PC-3 (cell line): ENCODE measurements at regions of chr16 and their contacts with region 1.

Region 1: DNA sequence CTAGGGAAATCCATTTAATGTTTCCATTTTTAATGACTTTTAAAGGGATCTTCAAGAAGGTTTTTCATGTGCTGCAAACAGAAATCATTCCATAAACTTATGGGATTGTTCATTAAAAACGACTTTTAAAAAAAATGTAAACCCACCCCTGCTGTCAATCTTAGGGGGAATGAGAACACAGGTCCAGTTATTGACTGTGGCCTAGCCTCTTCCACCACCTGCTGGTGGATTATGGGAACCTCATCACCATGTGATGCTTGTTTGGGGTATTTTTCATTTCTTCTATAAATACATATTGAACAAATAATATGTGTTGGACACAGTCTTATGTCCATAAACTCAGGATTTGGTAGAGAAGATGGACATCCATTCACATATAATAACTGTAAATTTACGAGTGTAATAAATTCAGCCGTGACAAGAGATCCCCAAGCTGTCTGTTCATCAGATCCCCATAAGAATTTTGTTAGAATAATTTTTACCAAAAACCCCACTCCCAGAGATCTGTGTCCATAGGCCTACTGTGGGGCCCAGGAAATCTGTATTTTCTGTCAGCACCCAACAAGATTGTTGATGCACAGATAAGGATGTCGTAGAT is 42.0 kb upstream of the TMC5 start:
- DNase-seq: peak; percentile 67
- ATAC-seq: peak; percentile 67
- H3K4me3 ChIP-seq: no peak overlapping the region
- H3K27ac ChIP-seq: no peak overlapping the region
- H3K4me1 ChIP-seq: no peaks in the 10 kb centered on the region
- H3K27me3 ChIP-seq: no peaks in the 10 kb centered on the region
- CTCF ChIP-seq: peak; percentile 86

Region 2: GRCh38 chr16:19167710-19168370 is 207.8 kb before region 1 on chr16 and contains the start of gene SYT17:
- CTCF ChIA-PET with region 1: no interaction called
- POLR2A ChIA-PET with region 1: no interaction called
- intact Hi-C with region 1: loop called (anchors 5 kb)
- DNase-seq: peak; percentile 79
- ATAC-seq: peak; percentile 88
- H3K4me3 ChIP-seq: peak within 1 kb of the TSS; percentile 79
- H3K27ac ChIP-seq: no peak within 1 kb of the TSS
- H3K4me1 ChIP-seq: no peaks in the 10 kb centered on the region
- H3K27me3 ChIP-seq: no peaks in the 10 kb centered on the region
- CTCF ChIP-seq: peak; percentile 65
- total RNA-seq, gene SYT17: 10.8 and 11.8 TPM in 2 replicates

Region 3: GRCh38 chr16:19179546-19180490 is 195.8 kb before region 1 on chr16:
- CTCF ChIA-PET with region 1: no interaction called
- POLR2A ChIA-PET with region 1: no interaction called
- intact Hi-C with region 1: loop called (anchors 5 kb)
- DNase-seq: peak; percentile 71
- ATAC-seq: peak; percentile 79
- H3K4me3 ChIP-seq: no peak overlapping the region
- H3K27ac ChIP-seq: no peak overlapping the region
- H3K4me1 ChIP-seq: no peaks in the 10 kb centered on the region
- H3K27me3 ChIP-seq: no peaks in the 10 kb centered on the region
- CTCF ChIP-seq: peak; percentile 81

Region 4: DNA sequence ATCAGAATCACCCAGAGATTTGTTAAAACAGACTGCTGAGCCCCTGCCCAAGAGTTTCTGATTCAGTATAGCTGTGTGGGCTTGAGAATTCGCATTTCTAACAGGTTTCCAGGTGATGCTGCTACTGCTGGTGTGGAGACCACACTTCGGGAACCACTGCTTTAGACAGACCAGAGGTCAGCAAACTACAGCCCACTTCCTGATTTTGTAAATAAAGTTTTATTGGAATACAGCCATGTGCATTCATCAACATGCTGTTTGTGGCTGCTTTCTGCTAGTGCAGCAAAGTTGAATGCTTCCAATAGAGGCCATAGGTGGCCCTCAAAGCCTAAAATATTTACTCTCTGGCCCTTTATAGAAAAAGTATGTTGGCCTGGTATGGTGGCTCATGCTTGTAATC is 122.8 kb before region 1 on chr16:
- CTCF ChIA-PET with region 1: no interaction called
- POLR2A ChIA-PET with region 1: no interaction called
- intact Hi-C with region 1: no loop called
- DNase-seq: no peak
- ATAC-seq: no peak
- H3K4me3 ChIP-seq: no peak overlapping the region
- H3K27ac ChIP-seq: no peak overlapping the region
- H3K4me1 ChIP-seq: no peaks in the 10 kb centered on the region
- H3K27me3 ChIP-seq: no peaks in the 10 kb centered on the region
- CTCF ChIP-seq: no peak